Upper lobe of right lung (tissue), 1 donor: ENCODE measurements at regions of chr9 and their contacts with region 1.

Region 1: DNA sequence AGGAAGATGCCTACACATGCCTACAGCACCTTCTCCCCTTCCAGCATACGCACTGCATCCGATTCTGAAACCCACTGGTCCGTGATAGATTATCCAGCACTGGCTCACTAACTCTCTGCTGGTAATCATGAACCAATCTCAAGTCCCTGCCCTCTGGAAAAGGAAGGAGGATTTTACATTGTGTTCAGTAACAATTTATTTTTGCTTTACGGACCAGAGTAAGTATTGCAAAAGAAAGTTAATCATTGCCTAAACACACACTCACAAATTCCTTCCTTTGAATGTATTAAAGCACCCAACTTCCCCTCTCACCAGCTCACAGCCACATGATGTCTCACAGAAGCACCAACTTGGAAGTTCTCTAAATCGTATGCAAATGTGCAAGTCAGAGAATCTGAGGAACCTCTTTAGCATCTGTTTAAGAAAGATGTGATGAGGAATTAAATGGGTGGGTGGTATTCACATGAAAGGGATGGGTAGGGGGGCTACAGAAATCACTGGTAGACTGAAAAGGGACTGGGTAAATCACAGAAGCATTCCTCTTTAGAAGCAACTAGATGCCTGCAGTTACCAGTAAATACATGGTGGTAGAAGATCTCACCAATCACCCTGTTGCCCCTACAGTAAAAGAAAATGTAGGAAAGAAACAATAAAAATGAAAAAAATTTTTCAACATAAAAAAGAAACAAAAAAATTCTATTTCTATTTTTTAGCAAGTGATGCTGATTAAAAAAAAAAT is 8.4 kb downstream of the GNAQ start:
- DNase-seq: no peak
- ATAC-seq: peak; percentile 91
- H3K4me3 ChIP-seq: peak overlapping the region; percentile 23
- H3K27ac ChIP-seq: peak overlapping the region; percentile 70
- H3K4me1 ChIP-seq: peaks cover 80% of the 10 kb centered on the region
- H3K27me3 ChIP-seq: no peaks in the 10 kb centered on the region
- CTCF ChIP-seq: no peak

Region 2: DNA sequence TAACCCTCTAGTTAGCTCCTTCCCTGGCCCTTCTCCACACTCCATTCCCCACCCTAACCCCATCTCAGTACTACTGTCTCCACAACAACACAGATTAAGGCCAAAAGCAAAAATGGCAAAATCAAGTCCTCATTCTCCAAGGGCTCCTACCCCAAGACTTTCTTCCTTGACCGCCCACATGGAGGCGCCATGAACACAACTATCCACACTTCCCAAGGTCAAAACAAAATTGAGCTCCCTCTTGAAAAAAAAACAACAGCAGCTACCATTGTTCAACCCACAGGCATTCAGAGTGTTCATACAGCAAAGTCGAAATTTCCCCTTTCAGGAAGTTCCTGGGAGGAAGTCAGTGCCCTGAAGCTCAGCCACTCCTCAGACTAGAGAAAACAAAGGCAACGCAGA is 46.0 kb before region 1 on chr9:
- intact Hi-C with region 1: loop called (anchors 10 kb)
- DNase-seq: no peak
- ATAC-seq: peak; percentile 87
- H3K4me3 ChIP-seq: no peak overlapping the region
- H3K27ac ChIP-seq: peak overlapping the region; percentile 58
- H3K4me1 ChIP-seq: peaks cover 44% of the 10 kb centered on the region
- H3K27me3 ChIP-seq: no peaks in the 10 kb centered on the region
- CTCF ChIP-seq: peak; percentile 53